ENCODE measurements at regions of chr19 and their contacts with region 1.

Region 1: GRCh38 chr19:45681391-45682015 is 10.2 kb downstream of the SNRPD2 start:
- DNase-seq: peak; percentile 92
- ATAC-seq: peak; percentile 84
- H3K4me3 Mint-ChIP-seq: peak overlapping the region; percentile 64
- H3K27ac Mint-ChIP-seq: peak overlapping the region; percentile 77
- H3K4me1 Mint-ChIP-seq: peaks cover 19% of the 10 kb centered on the region
- H3K27me3 Mint-ChIP-seq: no peaks in the 10 kb centered on the region

Region 2: DNA sequence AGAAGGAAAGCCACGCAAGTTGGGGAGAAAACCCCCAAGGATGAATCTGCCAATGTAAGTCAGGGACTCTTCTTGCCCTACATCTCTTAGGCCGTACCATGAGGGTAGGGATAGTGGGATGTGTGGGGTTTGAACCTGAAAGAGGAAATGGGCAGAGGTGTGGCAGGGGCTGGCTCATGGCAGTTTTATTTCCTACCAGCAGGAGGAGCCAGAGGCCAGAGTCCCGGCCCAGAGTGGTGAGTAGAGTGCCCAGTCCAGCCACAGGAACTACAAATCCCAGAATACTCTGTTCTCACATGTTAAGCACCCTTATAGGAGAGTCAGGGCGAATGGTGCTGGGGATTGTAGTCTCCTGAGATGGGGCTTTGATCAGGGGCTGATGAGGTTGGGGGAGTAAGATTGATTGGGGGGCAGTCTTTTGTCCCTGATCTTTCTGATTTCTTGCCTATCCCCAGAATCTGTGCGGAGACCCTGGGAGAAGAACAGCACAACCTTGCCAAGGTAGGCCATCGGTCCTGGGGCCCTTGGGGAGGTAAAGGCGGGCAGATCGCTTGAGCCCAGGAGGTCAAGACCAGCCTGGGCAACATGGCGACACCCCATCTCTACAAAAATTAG is 157.8 kb before region 1 on chr19:
- CTCF ChIA-PET with region 1: interaction called, 6 read pairs
- POLR2A ChIA-PET with region 1: no interaction called
- intact Hi-C with region 1: loop called in 1 of 2 experiments (anchors 1 kb)
- DNase-seq: peak; percentile 84
- ATAC-seq: peak; percentile 99
- H3K4me3 Mint-ChIP-seq: no peak overlapping the region
- H3K27ac Mint-ChIP-seq: peak overlapping the region; percentile 19
- H3K4me1 Mint-ChIP-seq: peaks cover 14% of the 10 kb centered on the region
- H3K27me3 Mint-ChIP-seq: peaks cover 2% of the 10 kb centered on the region

Region 3: GRCh38 chr19:45591004-45591637 is 90.4 kb before region 1 on chr19:
- CTCF ChIA-PET with region 1: no interaction called
- POLR2A ChIA-PET with region 1: no interaction called
- intact Hi-C with region 1: loop called in 1 of 2 experiments (anchors 1 kb)
- DNase-seq: peak; percentile 79
- ATAC-seq: peak; percentile 89
- H3K4me3 Mint-ChIP-seq: no peak overlapping the region
- H3K27ac Mint-ChIP-seq: no peak overlapping the region
- H3K4me1 Mint-ChIP-seq: peaks cover 11% of the 10 kb centered on the region
- H3K27me3 Mint-ChIP-seq: peaks cover 30% of the 10 kb centered on the region

Region 4: DNA sequence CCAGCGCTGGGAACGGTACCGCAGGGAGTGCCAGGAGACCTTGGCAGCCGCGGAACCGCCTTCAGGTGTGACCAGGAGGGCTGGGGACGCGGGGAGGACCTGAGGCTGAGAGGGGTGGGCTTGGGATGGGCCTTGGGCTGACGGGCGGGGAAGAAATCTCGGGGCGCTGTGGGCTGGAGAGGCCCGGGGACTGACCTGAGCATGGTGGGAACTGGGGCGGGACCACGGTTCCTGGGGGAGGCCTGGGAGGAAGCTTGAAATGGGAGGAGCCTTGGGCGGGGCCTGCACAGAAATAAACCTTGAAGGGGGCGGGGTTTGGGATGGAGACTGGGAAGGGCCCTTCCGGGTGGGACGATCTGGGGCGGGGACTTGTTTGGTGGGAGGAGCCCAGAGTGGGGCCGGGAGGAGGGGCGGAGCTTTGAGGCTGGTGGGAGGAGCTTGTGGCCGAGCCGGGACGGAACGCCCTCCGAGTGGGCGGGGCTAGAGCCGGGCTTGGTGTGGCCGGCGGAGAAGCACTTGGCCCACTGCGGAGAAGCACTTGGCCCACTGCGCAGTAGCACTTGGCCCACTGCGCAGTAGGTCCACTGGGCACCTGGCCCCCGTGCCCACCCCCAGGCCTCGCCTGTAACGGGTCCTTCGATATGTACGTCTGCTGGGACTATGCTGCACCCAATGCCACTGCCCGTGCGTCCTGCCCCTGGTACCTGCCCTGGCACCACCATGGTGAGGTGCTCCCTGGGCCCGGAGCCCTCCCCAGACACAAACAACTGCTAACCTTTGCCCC is 10.6 kb before region 1 on chr19:
- CTCF ChIA-PET with region 1: interaction called, 12 read pairs
- POLR2A ChIA-PET with region 1: interaction called, 4 read pairs
- intact Hi-C with region 1: loop called in 1 of 2 experiments (anchors 1 kb)
- DNase-seq: peak; percentile 89
- ATAC-seq: peak; percentile 39
- H3K4me3 Mint-ChIP-seq: peak overlapping the region; percentile 18
- H3K27ac Mint-ChIP-seq: no peak overlapping the region
- H3K4me1 Mint-ChIP-seq: peaks cover 24% of the 10 kb centered on the region
- H3K27me3 Mint-ChIP-seq: peaks cover 18% of the 10 kb centered on the region

Region 5: GRCh38 chr19:45717166-45717982 is 35.9 kb after region 1 on chr19:
- CTCF ChIA-PET with region 1: interaction called, 3 read pairs
- POLR2A ChIA-PET with region 1: interaction called, 8 read pairs
- intact Hi-C with region 1: loop called in 1 of 2 experiments (anchors 1 kb)
- DNase-seq: peak; percentile 99
- ATAC-seq: peak; percentile 97
- H3K4me3 Mint-ChIP-seq: peak overlapping the region; percentile 93
- H3K27ac Mint-ChIP-seq: peak overlapping the region; percentile 94
- H3K4me1 Mint-ChIP-seq: peaks cover 40% of the 10 kb centered on the region
- H3K27me3 Mint-ChIP-seq: no peaks in the 10 kb centered on the region

Region 6: GRCh38 chr19:45792470-45793177 is 111.1 kb after region 1 on chr19 and contains the start of gene DMWD:
- CTCF ChIA-PET with region 1: no interaction called
- POLR2A ChIA-PET with region 1: no interaction called
- intact Hi-C with region 1: no loop called
- DNase-seq: peak; percentile 100
- ATAC-seq: peak; percentile 93
- H3K4me3 Mint-ChIP-seq: peak within 1 kb of the TSS; percentile 95
- H3K27ac Mint-ChIP-seq: peak within 1 kb of the TSS; percentile 75
- H3K4me1 Mint-ChIP-seq: peaks cover 30% of the 10 kb centered on the region
- H3K27me3 Mint-ChIP-seq: peaks cover 16% of the 10 kb centered on the region
- total RNA-seq, gene DMWD: 31.1 to 35.1 TPM

Region 7: GRCh38 chr19:45852145-45852750 is 170.7 kb after region 1 on chr19:
- CTCF ChIA-PET with region 1: no interaction called
- POLR2A ChIA-PET with region 1: no interaction called
- intact Hi-C with region 1: no loop called
- DNase-seq: no peak
- ATAC-seq: no peak
- H3K4me3 Mint-ChIP-seq: no peak overlapping the region
- H3K27ac Mint-ChIP-seq: peak overlapping the region; percentile 7
- H3K4me1 Mint-ChIP-seq: no peaks in the 10 kb centered on the region
- H3K27me3 Mint-ChIP-seq: no peaks in the 10 kb centered on the region

Measured in activated CD4-positive, alpha-beta T cell treated with anti-CD3 and anti-CD28 coated beads for 36 hours (primary cell).